Activated T-helper 1 cell treated with anti-CD3 and anti-CD28 coated beads, Interleukin-12 subunit alpha, Interleukin-12 subunit beta, Interleukin-2, Interleukin-4 antibody, amounts not matched to agents 30 ng/mL and 10 ng/mL and 1 ng/mL, durations not matched to agents 14 hours and 24 hours and 36 hours (primary cell): ENCODE measurements at regions of chr22 and their contacts with region 1.

Region 1: DNA sequence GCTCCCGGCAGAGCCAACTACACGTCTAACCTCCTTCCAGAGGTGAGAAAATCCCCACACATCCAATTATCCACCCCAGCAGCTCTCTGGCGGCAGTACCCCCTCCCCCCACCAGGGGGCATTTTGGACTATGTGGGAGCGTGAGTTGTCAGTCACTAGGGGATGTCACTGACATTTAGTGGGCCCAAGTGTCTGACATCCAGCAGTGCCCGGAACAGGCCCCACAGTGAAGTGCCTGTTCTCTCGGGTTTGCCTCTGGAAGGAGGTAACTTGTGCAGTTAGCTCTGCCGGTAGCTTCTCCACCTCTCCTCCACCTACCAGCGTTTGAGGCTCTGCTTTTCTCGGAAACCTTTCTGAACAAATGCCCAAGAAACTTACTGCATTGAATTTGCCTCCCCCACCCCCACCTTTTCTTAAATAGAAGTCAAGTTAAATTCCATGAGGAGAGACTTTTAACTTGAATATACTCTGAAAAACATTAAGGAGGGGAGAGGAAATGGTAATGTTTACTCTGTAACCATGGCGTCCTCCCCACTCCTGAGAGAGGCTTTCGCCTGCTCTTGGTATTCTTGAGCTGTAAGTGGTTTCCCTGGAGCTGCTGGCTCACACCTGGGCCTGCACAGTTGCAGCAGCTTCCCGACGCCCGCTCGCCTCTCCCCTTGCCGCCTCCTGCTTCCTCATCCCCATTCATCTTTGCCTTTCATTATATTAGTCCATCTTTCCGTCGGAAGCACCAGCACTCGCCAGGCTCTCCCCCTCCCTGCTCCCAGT is 112.8 kb downstream of the WNT7B start:
- DNase-seq: peak; percentile 51
- H3K4me3 Mint-ChIP-seq: no peak overlapping the region
- H3K27ac Mint-ChIP-seq: no peak overlapping the region
- H3K4me1 Mint-ChIP-seq: peaks cover 8% of the 10 kb centered on the region
- H3K27me3 Mint-ChIP-seq: peaks cover 24% of the 10 kb centered on the region

Region 2: DNA sequence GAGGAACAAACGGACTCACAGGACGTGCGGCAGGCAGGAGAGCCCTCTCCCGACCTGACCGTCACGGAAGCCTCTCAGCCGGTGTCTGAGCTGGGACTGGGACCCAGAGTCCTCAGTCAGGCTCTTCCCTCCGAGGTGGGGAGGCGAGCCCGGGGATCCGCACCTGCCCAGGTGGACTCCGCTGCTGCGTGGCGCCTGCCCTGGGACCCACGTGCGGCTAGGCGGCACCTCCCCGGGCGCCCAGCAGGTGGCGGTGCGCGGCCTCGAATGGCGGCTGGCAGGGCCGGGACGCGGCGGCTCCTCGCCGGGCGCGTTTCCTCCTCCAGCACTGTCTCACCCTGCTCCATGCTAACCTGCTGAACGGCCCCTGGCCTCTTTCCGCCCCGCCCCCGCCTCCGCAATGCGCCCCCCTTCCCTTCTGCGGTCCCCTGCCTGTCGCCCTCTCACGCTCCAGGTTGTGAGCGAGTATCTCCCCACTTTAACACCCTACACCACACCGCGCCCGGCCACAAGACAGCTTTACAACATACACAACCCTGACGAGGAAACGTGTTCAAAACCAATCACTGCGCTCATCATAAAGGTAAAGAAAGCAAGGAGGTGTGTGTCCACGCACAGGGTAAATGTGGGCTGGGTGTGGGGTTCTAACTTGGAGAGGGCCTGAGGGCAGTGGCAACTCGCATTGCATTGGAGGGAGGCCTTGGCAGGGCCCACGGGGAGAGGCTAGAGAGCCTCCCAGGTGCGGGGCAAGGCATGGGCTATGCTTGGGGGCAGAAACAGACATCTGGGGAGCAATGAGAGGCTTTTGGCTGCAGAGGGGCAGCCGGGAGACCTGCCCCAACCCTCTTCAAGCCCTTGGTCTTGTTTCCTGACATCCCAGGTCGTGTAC is 218.4 kb before region 1 on chr22:
- intact Hi-C with region 1: loop called (anchors 1 kb)
- DNase-seq: peak; percentile 70
- H3K4me3 Mint-ChIP-seq: no peak overlapping the region
- H3K27ac Mint-ChIP-seq: peak overlapping the region; percentile 35
- H3K4me1 Mint-ChIP-seq: peaks cover 10% of the 10 kb centered on the region
- H3K27me3 Mint-ChIP-seq: peaks cover 37% of the 10 kb centered on the region